IMR-90 (cell line): ENCODE measurements at regions of chr2 and their contacts with region 1.

Region 1: DNA sequence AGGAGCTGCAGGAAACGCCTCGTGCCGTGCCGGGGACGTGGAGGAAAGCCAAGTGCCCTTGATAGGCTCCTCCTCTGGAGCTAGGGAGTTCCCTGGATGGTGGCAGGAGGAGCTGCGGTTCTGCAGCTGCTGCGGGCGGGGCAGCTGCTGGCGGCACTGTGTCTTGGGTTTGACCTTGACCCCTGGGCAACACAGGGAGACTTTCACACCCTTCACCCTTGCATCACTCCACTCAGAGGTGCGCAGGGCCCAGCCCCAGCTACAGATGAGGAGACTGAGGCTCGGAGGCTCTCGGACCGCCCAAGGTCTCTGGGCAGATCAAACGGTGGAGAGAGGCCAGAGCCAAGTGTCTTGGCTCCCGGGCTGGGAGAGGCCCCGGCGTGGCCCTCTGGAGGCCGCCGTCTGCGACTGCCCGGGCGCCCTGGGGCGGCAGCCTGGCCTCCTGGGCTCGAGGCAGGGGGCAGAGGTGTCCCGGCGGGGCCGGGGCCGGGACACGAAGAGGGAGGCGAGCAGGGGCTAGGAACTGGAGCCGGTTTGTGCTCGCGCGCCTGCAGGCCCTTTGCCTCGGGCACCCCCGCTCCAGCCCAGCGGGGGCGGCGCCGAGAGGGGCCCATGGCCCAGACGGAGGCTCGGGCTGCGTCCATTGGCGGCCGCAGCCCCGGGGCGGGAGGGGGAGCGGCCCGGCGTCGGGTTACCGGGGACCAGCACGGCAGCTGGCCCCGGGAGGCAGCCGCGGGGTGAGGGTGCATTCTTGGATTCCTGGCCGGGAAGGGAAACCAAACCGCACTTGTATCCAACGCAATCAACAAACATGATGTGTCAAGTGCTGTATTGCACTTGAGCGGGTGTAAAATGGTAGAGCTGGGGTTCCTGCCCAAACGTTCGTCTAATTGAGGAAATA is 129.6 kb upstream of the SLC1A4 start:
- DNase-seq: peak; percentile 87
- ATAC-seq: peak; percentile 95
- H3K4me3 ChIP-seq: peak overlapping the region; percentile 15
- H3K27ac ChIP-seq: peak overlapping the region; percentile 74
- H3K4me1 ChIP-seq: peaks cover 27% of the 10 kb centered on the region
- H3K27me3 ChIP-seq: peaks cover 6% of the 10 kb centered on the region
- CTCF ChIP-seq: 0 out of 2 replicates have a peak, but pooled peaks have one; percentile 4
- POLR2A ChIP-seq: no peak
- RAD21 ChIP-seq: 0 out of 2 replicates have a peak, but pooled peaks have one; percentile 17

Region 2: GRCh38 chr2:64634345-64635267 is 225.0 kb before region 1 on chr2:
- CTCF ChIA-PET with region 1: no interaction called
- POLR2A ChIA-PET with region 1: no interaction called
- dilution Hi-C with region 1: no loop called
- in situ Hi-C with region 1: loop called (anchors 5 kb)
- intact Hi-C with region 1: no loop called
- DNase-seq: peak; percentile 72
- ATAC-seq: peak; percentile 60
- H3K4me3 ChIP-seq: no peak overlapping the region
- H3K27ac ChIP-seq: no peak overlapping the region
- H3K4me1 ChIP-seq: peaks cover 10% of the 10 kb centered on the region
- H3K27me3 ChIP-seq: no peaks in the 10 kb centered on the region
- CTCF ChIP-seq: no peak
- POLR2A ChIP-seq: no peak
- RAD21 ChIP-seq: no peak

Region 3: GRCh38 chr2:64653349-64654062 is 206.1 kb before region 1 on chr2 and contains the start of gene SERTAD2:
- CTCF ChIA-PET with region 1: interaction called, 4 read pairs
- POLR2A ChIA-PET with region 1: interaction called, 7 read pairs
- dilution Hi-C with region 1: no loop called
- in situ Hi-C with region 1: no loop called
- intact Hi-C with region 1: loop called (anchors 1 kb)
- DNase-seq: peak; percentile 84
- ATAC-seq: peak; percentile 91
- H3K4me3 ChIP-seq: peak within 1 kb of the TSS; percentile 98
- H3K27ac ChIP-seq: peak within 1 kb of the TSS; percentile 98
- H3K4me1 ChIP-seq: peaks cover 5% of the 10 kb centered on the region
- H3K27me3 ChIP-seq: no peaks in the 10 kb centered on the region
- CTCF ChIP-seq: peak; percentile 16; the same call in 1 of the 2 replicates
- POLR2A ChIP-seq: no peak
- RAD21 ChIP-seq: peak; percentile 24; the same call in 1 of the 2 replicates
- total RNA-seq, gene SERTAD2: 5.0 and 6.7 TPM in 2 replicates

Region 4: GRCh38 chr2:64767670-64768468 is 91.7 kb before region 1 on chr2:
- CTCF ChIA-PET with region 1: interaction called, 4 read pairs
- POLR2A ChIA-PET with region 1: no interaction called
- dilution Hi-C with region 1: no loop called
- in situ Hi-C with region 1: no loop called
- intact Hi-C with region 1: loop called (anchors 2 kb)
- DNase-seq: peak; percentile 89
- ATAC-seq: peak; percentile 76
- H3K4me3 ChIP-seq: peak overlapping the region; percentile 64
- H3K27ac ChIP-seq: peak overlapping the region; percentile 91
- H3K4me1 ChIP-seq: peaks cover 16% of the 10 kb centered on the region
- H3K27me3 ChIP-seq: no peaks in the 10 kb centered on the region
- CTCF ChIP-seq: no peak
- POLR2A ChIP-seq: peak; percentile 58
- RAD21 ChIP-seq: peak; percentile 32; the same call in 1 of the 2 replicates

Region 5: DNA sequence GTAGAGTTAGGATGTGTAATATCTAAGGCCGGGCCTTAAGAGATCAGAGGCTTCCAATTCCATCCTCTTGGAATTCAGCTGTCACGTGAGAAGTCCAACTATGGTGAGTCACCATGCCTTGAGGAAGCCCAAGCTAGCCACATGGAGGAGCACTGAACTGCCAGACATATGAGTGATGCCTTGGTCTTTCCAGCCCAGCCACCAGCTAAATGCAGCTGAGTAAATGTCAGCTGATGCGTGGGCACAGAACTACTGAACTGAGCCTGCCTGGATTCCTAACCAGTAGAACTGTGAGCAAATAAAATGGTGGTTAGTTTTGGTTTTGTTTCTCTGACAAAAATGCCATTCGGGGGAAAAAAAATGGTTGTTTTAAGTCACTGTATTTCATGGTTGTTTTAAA is 52.1 kb before region 1 on chr2:
- CTCF ChIA-PET with region 1: no interaction called
- POLR2A ChIA-PET with region 1: interaction called, 6 read pairs
- dilution Hi-C with region 1: no loop called
- in situ Hi-C with region 1: no loop called
- intact Hi-C with region 1: loop called (anchors 5 kb)
- DNase-seq: peak; percentile 100
- ATAC-seq: peak; percentile 96
- H3K4me3 ChIP-seq: no peak overlapping the region
- H3K27ac ChIP-seq: peak overlapping the region; percentile 76; the same call in 1 of the 2 replicates
- H3K4me1 ChIP-seq: peaks cover 12% of the 10 kb centered on the region
- H3K27me3 ChIP-seq: no peaks in the 10 kb centered on the region
- CTCF ChIP-seq: peak; percentile 22; the same call in 1 of the 2 replicates
- POLR2A ChIP-seq: no peak
- RAD21 ChIP-seq: peak; percentile 48